ENCODE measurements at regions of chr16 and their contacts with region 1.

Region 1: DNA sequence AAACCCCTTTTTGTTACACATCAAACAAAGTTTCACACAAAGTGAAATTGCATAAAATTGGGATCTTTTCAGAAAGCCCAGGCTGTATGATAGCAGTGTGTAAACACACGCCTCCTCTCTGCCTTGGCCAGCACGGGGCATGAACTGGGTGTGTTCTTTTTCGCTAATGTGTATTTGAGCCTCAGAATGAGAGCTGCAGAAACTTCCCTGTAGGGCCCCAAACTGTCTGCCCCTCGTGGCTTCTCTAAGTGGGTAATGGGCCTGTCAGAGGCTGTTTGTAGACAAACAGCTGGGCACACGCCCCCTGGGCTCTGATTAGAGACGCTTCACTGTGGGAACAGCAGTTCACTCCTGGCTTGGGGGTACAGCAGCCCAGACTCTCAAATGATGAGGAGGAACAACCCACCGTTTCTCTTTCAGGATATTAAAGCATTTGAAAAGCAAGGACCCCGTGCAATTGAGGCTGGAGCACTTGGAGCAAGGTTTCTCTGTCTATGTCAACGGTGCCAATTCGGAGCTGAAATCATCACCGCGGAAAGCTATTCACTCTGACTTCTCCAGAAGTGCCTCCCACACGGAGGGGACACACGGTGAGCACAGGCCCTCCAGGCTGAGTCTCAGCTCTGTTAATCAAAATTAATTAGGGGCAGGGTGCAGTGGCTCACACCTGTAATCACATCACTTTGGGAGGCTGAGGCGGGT is 78.4 kb downstream of the KATNIP start:
- DNase-seq: no peak
- ATAC-seq: no peak
- H3K4me3 ChIP-seq: no peak overlapping the region
- H3K27ac ChIP-seq: no peak overlapping the region
- H3K4me1 ChIP-seq: no peaks in the 10 kb centered on the region
- H3K27me3 ChIP-seq: no peaks in the 10 kb centered on the region
- CTCF ChIP-seq: no peak
- EP300 ChIP-seq: no peak
- POLR2A ChIP-seq: no peak
- RAD21 ChIP-seq: no peak

Region 2: DNA sequence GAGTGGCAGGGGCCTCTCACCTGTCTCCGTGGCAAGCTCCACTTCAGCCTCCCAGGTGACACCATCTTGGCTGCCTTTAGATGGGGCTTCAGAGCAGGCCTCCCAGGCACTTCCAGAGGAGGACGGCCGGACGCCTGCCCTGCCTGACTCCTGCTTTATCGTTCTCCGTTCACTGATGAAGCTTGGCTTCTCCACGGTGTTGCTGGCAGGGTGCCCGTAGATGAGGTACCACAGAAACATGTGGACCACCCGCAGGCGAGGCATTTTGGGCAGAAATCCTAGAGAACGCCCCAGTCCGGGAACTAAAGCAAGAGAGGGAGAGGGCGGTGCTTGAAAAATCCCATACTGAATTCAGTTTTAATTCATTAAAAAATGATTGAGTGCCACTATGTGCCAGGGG is 133.2 kb before region 1 on chr16:
- CTCF ChIA-PET with region 1: no interaction called
- POLR2A ChIA-PET with region 1: no interaction called
- RAD21 ChIA-PET with region 1: no interaction called
- SMC1A ChIA-PET with region 1: no interaction called
- in situ Hi-C with region 1: no loop called
- intact Hi-C with region 1: no loop called
- DNase-seq: no peak
- ATAC-seq: no peak
- H3K4me3 ChIP-seq: no peak overlapping the region
- H3K27ac ChIP-seq: no peak overlapping the region
- H3K4me1 ChIP-seq: no peaks in the 10 kb centered on the region
- H3K27me3 ChIP-seq: no peaks in the 10 kb centered on the region
- CTCF ChIP-seq: no peak
- EP300 ChIP-seq: no peak
- POLR2A ChIP-seq: no peak
- RAD21 ChIP-seq: no peak

Region 3: GRCh38 chr16:27572711-27573110 is 55.7 kb before region 1 on chr16:
- CTCF ChIA-PET with region 1: no interaction called
- POLR2A ChIA-PET with region 1: no interaction called
- RAD21 ChIA-PET with region 1: no interaction called
- SMC1A ChIA-PET with region 1: no interaction called
- in situ Hi-C with region 1: no loop called
- intact Hi-C with region 1: no loop called
- DNase-seq: no peak
- ATAC-seq: no peak
- H3K4me3 ChIP-seq: no peak overlapping the region
- H3K27ac ChIP-seq: no peak overlapping the region
- H3K4me1 ChIP-seq: no peaks in the 10 kb centered on the region
- H3K27me3 ChIP-seq: no peaks in the 10 kb centered on the region
- CTCF ChIP-seq: no peak
- EP300 ChIP-seq: no peak
- POLR2A ChIP-seq: no peak
- RAD21 ChIP-seq: no peak

Region 4: DNA sequence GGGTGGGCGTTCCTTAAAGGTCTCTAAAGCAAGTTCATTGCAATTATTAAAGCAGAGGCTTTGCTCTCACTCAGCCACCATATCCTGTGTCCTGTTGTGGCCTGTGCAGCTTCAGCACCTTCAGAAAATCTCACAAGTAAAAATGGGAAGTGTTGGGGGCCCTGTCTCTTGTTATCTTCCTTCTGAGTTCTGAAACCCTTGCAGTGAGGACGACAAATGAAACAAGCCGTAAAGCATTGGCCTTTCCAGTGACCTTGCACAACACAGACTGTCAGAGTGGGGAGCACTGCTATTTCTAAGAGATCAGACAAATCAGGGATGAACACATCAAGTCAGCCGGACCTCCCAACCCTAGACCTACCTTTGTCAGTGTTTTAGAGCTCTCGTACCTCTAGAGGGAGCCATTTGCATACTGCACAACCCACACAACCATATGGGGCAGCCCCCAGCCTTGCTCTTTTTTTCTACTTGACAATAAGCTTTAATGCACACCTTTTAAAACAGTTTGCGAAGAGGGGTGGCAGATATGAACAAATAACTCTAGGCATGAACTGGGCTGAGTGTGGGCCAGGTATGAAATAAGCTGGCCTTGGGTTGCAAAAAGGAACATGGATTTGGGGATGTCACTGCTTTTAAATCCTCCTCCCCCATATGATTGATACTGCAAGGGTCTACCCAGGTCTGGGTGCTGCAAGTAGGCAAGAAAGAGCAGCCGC is 11.3 kb after region 1 on chr16:
- CTCF ChIA-PET with region 1: interaction called, 34 read pairs
- POLR2A ChIA-PET with region 1: no interaction called
- RAD21 ChIA-PET with region 1: no interaction called
- SMC1A ChIA-PET with region 1: interaction called, 3 read pairs
- in situ Hi-C with region 1: no loop called
- intact Hi-C with region 1: no loop called
- DNase-seq: peak; percentile 2
- ATAC-seq: peak; percentile 97
- H3K4me3 ChIP-seq: no peak overlapping the region
- H3K27ac ChIP-seq: no peak overlapping the region
- H3K4me1 ChIP-seq: peaks cover 12% of the 10 kb centered on the region
- H3K27me3 ChIP-seq: no peaks in the 10 kb centered on the region
- CTCF ChIP-seq: peak; percentile 68 to 89 (median 81)
- EP300 ChIP-seq: no peak
- POLR2A ChIP-seq: no peak
- RAD21 ChIP-seq: peak; percentile 79

Region 5: DNA sequence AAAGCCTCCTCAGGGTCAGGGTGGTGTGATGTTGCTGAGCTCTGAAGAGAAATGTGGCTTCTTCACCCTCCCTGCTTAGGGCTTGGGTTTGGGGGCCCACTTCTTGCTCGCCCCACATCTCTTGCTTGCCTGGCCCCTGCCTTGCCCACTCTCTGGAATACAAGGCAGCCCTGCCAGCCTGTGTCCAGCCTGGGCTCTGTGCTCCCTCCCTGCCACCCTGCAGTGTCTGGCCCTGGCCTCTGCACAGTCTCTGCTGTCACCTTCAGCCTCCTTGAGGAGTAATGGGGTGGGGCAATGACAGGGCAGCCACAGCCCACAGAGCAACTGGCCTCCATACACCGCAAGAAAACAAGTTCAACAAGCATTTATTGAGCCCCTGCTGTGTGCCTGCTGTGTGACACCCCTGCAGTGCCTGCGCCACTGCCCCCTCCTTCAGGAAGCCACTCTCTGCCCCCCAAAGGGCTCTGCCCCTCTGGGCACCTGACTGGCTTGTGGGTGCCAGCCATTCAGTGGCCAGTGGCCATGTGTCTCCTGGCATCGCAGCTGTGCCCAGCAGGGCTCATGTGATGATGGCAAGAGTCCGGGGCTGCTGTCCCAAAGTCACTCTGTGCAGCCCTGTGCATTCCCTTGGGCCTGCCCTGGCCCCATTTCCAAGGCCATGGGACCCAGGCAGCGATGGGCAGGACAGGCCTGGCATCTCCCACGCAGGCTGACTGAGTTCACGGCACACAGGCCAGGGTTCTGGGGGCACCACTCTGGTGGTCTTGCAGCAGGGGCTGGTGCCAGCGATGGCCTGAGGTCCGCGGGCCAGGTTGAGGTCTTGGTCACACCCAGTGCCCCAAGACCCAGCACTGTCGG is 162.4 kb after region 1 on chr16:
- CTCF ChIA-PET with region 1: no interaction called
- POLR2A ChIA-PET with region 1: no interaction called
- RAD21 ChIA-PET with region 1: no interaction called
- SMC1A ChIA-PET with region 1: no interaction called
- in situ Hi-C with region 1: no loop called
- intact Hi-C with region 1: no loop called
- DNase-seq: no peak
- ATAC-seq: no peak
- H3K4me3 ChIP-seq: no peak overlapping the region
- H3K27ac ChIP-seq: no peak overlapping the region
- H3K4me1 ChIP-seq: no peaks in the 10 kb centered on the region
- H3K27me3 ChIP-seq: no peaks in the 10 kb centered on the region
- CTCF ChIP-seq: no peak
- EP300 ChIP-seq: no peak
- POLR2A ChIP-seq: no peak
- RAD21 ChIP-seq: no peak

Measured in GM12878 (cell line).